Head of caudate nucleus (tissue), 42 donors: ENCODE measurements at regions of chr12 and their contacts with region 1.

Region 1: GRCh38 chr12:53047221-53048042 is 2.4 kb upstream of the TNS2 start:
- DNase-seq: peak in 40 of 42 donors; percentile 50 to 89 (median 74)

Region 2: DNA sequence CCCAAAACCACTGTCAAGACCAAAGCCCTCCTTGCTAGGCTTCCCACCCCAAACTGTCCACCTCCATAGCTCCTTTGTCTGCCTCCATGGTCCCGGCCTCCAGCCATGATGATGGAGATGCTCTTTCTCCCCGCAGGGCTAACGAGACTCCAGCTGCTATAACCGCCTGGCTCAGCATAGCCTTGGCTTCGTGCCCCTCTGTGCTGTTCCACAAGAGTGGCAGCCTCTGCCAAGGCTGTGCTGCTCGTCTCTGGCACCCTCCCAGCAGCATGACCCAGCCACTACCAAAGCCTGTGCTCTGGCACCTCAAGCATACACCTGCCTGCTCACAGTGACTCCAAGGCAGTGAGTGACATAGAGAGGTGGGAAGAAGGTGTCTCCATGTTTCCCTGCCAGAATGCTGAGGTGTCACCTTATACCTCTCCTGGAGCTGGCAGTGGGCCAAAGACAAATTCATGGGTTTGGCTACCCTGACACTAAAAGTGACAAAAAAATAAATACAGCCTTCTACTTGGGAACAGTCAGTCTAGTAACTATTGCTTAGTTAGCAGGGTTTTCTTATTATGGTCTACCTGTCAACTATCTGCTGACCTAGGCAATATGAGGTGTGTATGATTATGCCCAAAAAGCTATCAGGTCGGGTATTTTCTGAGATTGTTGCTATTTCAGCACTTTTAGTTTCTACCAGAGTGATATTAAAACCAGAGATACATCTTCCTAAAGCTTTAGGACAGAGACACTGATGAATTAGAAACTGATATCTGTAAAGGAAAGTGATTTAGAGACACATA is 413.0 kb before region 1 on chr12:
- intact Hi-C with region 1: no loop called
- DNase-seq: peak; percentile 59 to 89 (median 80)

Region 3: GRCh38 chr12:52969828-52970569 is 77.4 kb before region 1 on chr12:
- intact Hi-C with region 1: no loop called
- DNase-seq: peak in 3 of 42 donors; percentile 4 to 43 (median 22)

Region 4: GRCh38 chr12:53122961-53123468 is 75.6 kb after region 1 on chr12:
- intact Hi-C with region 1: no loop called
- DNase-seq: peak in 9 of 42 donors; percentile 10 to 61 (median 40)

Region 5: DNA sequence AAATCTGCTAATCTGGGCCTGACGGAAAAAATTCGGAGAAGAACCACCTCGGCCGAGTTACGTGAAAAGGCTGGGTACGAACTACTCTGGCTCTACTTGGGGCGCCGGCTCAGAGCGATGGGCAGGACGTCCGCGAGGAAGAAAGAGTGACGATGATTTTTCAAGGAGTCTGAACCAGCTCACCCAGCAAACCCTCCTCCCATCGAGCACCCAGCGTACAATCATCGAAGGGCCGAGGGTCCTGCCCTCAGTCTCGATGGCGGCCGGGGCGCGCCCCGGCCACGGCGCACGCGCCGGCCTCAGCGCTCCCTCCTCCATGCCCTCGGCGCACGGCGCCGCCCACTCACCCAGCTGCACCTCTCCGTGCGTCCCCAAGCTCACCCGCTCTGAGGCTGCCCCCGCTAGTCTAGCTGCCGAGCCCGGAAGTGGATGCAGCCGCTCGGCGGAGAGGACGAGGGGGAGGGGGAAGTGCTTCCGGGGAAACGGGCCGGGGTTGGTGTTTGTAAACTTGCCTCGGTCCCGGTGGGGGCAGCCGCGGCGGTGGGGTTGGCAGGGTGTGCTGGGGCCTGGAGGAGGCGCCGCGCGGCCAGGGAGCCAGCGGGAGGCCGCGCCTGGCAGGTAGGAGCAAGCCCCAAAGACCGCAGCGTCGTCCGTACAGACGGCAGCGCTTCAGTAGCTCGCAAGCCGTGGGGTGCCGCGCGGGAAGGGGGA is 132.9 kb after region 1 on chr12 and contains the starts of genes CSAD and ZNF740:
- intact Hi-C with region 1: loop called (anchors 5 kb)
- DNase-seq: peak; percentile 93 to 99 (median 98)